ENCODE measurements at regions of chr5 and their contacts with region 1.

Region 1: GRCh38 chr5:149561848-149562247 is 10.6 kb upstream of the CSNK1A1 start:
- DNase-seq: no peak

Region 2: DNA sequence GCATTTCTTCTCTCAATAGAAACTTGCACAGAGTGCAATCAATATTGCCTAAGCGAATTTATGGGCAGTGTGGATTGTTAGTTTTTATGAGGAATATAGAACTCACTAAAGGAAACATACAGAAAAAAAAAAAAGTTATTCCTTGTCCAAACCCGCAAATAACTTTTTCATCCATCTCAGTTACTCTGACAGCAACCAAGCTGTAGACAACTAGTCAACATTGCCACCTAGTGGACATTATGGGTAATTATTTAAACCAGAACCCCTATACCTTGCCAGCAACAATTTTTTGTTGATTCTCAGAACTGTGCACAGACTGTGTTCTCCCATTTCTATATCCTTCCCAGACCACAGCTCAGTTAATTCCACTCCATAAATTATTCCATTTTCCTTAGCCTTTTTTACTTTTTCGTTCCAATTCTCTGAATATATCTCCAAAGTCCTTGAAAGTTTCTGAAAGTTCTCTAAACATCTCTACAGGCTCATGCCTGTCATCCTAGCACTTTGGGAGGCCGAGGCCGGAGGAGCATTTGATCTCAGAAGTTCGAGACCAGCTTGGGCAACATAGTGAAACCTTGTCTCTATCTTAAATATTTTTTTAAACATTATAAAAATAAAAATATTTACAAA is 292.8 kb before region 1 on chr5:
- CTCF ChIA-PET with region 1: interaction called, 10 read pairs
- POLR2A ChIA-PET with region 1: no interaction called
- DNase-seq: peak; percentile 60

Region 3: GRCh38 chr5:149381987-149382340 is 179.9 kb before region 1 on chr5:
- CTCF ChIA-PET with region 1: interaction called, 14 read pairs
- POLR2A ChIA-PET with region 1: no interaction called
- DNase-seq: peak; percentile 87

Region 4: GRCh38 chr5:149422366-149423048 is 139.3 kb before region 1 on chr5:
- CTCF ChIA-PET with region 1: no interaction called
- POLR2A ChIA-PET with region 1: no interaction called
- DNase-seq: no peak

Region 5: GRCh38 chr5:149448831-149449714 is 112.8 kb before region 1 on chr5:
- CTCF ChIA-PET with region 1: interaction called, 10 read pairs
- POLR2A ChIA-PET with region 1: interaction called, 5 read pairs
- DNase-seq: no peak

Measured in HEK293T (cell line).